ENCODE measurements at regions of chr14 and their contacts with region 1.

Region 1: GRCh38 chr14:68676511-68676943 is 116.3 kb downstream of the ZFP36L1 start:
- DNase-seq: peak; percentile 93
- H3K4me3 Mint-ChIP-seq: no peak overlapping the region
- H3K27ac Mint-ChIP-seq: peak overlapping the region; percentile 42
- H3K4me1 Mint-ChIP-seq: peaks cover 44% of the 10 kb centered on the region
- H3K27me3 Mint-ChIP-seq: no peaks in the 10 kb centered on the region
- CTCF ChIP-seq: no peak

Region 2: DNA sequence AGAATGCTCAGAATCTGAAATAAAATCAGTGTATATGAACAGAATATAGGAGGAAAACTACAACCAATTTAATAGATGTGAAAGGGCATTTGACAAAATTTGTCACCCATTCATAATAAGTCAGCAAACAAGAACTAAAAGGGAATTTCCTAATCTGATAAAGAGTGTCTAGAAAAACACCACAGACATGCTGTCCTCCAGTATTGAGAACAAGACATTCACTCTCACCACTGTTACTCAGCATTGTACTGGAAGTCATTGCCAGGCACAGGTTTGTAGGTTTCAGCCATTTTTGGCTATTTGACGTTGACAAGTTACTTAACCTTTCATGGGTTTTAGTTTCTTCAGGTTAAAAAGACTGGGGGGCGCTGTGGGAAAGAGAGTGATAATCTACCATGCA is 1303.2 kb before region 1 on chr14:
- CTCF ChIA-PET with region 1: no interaction called
- POLR2A ChIA-PET with region 1: no interaction called
- intact Hi-C with region 1: no loop called
- DNase-seq: no peak
- H3K4me3 Mint-ChIP-seq: no peak overlapping the region
- H3K27ac Mint-ChIP-seq: no peak overlapping the region
- H3K4me1 Mint-ChIP-seq: peaks cover 11% of the 10 kb centered on the region
- H3K27me3 Mint-ChIP-seq: no peaks in the 10 kb centered on the region
- CTCF ChIP-seq: no peak

Region 3: DNA sequence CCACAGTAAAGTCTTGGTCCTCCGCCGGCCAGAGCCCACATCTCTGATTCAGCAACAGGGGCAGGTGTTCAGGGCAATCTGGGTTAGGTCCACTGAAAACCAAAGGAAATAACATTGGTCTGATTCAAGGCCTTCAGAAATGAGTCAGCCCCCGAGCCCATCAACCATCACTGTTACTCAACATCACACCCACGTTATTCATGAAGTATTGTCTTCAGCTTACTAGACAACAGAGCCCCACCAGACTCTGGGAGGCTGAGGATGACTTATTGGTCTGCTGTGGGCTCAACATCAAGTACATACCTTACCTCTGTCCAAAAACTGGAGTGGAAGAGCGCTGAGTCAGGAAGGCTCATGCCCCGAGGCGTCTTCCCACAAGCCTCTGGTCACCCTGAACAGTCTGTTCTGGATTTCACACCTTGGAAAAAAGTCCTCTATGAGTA is 18.8 kb after region 1 on chr14:
- CTCF ChIA-PET with region 1: interaction called, 4 read pairs
- POLR2A ChIA-PET with region 1: interaction called, 15 read pairs
- intact Hi-C with region 1: no loop called
- DNase-seq: peak; percentile 99
- H3K4me3 Mint-ChIP-seq: peak overlapping the region; percentile 40
- H3K27ac Mint-ChIP-seq: peak overlapping the region; percentile 96
- H3K4me1 Mint-ChIP-seq: peaks cover 44% of the 10 kb centered on the region
- H3K27me3 Mint-ChIP-seq: no peaks in the 10 kb centered on the region
- CTCF ChIP-seq: no peak

Region 4: GRCh38 chr14:68703093-68703492 is 26.6 kb after region 1 on chr14:
- CTCF ChIA-PET with region 1: no interaction called
- POLR2A ChIA-PET with region 1: interaction called, 13 read pairs
- intact Hi-C with region 1: no loop called
- DNase-seq: peak; percentile 91
- H3K4me3 Mint-ChIP-seq: no peak overlapping the region
- H3K27ac Mint-ChIP-seq: peak overlapping the region; percentile 67
- H3K4me1 Mint-ChIP-seq: peaks cover 43% of the 10 kb centered on the region
- H3K27me3 Mint-ChIP-seq: no peaks in the 10 kb centered on the region
- CTCF ChIP-seq: no peak

Measured in MCF 10A (cell line).